ENCODE measurements at regions of chr9 and their contacts with region 1.

Region 1: DNA sequence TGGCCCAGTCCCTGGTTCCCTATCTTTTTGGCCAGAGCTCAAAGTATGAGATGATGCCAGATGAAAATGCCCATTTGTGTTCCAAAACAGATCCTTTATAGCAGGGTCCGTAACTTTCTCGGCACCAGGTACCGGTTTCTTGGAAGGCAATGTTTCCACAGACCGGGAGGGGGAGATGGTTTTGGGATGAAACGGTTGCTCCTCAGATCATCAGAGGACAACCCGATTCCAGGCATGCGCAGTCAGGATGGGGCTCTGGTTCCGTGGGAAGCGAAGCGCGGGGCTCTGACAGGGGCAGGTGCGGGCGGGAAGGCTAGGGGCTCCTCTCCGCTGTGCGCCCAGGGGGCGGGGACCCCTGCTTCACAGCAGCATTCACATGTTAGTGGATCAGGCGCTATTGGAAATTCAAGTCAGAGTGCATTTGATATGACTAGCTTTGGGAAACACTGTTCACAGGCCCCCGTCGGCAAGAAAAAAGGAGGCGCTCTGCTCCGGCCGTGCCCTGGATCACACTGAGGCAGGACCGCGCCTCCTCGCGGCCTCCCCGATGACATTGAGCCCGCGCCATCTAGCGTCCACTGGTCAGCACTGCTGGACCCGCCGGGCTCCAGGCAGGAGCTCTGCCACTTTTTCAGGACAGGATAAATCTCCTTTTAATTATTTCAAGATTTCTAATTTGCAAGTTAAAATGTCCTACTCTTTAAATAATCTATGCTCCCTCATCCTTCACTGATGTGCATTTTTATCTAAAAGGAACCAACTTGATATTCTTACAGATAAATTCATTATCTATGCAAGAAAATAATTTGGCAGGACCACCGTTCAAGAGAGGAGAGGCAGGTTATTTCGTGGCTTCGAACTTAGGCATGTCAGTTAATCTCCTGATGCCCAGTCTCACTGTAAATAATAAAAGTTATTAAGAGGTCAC is 190.0 kb downstream of the FANCC start:
- DNase-seq: peak; percentile 52
- H3K4me3 Mint-ChIP-seq: no peak overlapping the region
- H3K27ac Mint-ChIP-seq: no peak overlapping the region
- H3K4me1 Mint-ChIP-seq: peaks cover 7% of the 10 kb centered on the region
- H3K27me3 Mint-ChIP-seq: no peaks in the 10 kb centered on the region

Region 2: GRCh38 chr9:94681508-94681907 is 446.0 kb before region 1 on chr9:
- intact Hi-C with region 1: loop called (anchors 1 kb)
- DNase-seq: peak; percentile 19
- H3K4me3 Mint-ChIP-seq: no peak overlapping the region
- H3K27ac Mint-ChIP-seq: no peak overlapping the region
- H3K4me1 Mint-ChIP-seq: no peaks in the 10 kb centered on the region
- H3K27me3 Mint-ChIP-seq: peaks cover 49% of the 10 kb centered on the region

Region 3: DNA sequence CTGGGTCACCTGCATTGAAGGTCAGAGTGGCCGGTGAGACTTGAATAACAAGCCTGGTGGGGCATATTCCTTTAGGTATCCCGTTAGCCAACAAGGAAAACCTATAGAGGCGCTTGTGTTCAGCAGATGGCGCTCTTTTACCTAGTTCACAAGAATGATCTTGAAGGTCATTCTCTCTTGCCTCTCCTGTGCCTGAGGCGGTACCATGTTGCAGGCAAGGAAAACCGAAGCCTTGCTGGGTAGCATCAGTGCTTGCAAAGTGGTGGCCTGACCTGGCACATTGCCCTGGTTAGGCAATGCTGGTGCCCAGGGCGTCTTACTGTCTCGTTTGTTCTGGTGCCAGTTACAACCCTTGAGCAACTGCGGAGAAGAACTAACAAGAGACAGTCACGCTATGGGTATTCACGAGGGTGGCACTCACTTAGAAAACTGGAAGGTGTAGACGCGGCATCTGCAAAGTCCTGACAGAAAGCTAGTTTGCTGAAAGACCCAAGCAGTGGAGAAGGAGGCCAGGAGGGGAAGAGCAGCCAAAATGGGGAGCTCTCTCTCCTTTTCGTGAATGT is 344.3 kb before region 1 on chr9:
- intact Hi-C with region 1: loop called (anchors 1 kb)
- DNase-seq: peak; percentile 10
- H3K4me3 Mint-ChIP-seq: no peak overlapping the region
- H3K27ac Mint-ChIP-seq: no peak overlapping the region
- H3K4me1 Mint-ChIP-seq: peaks cover 17% of the 10 kb centered on the region
- H3K27me3 Mint-ChIP-seq: no peaks in the 10 kb centered on the region

Region 4: GRCh38 chr9:95092262-95093072 is 35.0 kb before region 1 on chr9:
- intact Hi-C with region 1: no loop called
- DNase-seq: no peak
- H3K4me3 Mint-ChIP-seq: no peak overlapping the region
- H3K27ac Mint-ChIP-seq: no peak overlapping the region
- H3K4me1 Mint-ChIP-seq: peaks cover 7% of the 10 kb centered on the region
- H3K27me3 Mint-ChIP-seq: no peaks in the 10 kb centered on the region

Measured in activated T-helper 2 cell treated with anti-CD3 and anti-CD28 coated beads, Interferon-gamma antibody, Interleukin-2, Interleukin-4, amounts not matched to agents 10 μg/mL and 5 μg/mL and 100 μg/mL, durations not matched to agents 14 hours and 24 hours and 36 hours (primary cell).